CD8-positive, alpha-beta T cell (primary cell): ENCODE measurements at regions of chr3 and their contacts with region 1.

Region 1: DNA sequence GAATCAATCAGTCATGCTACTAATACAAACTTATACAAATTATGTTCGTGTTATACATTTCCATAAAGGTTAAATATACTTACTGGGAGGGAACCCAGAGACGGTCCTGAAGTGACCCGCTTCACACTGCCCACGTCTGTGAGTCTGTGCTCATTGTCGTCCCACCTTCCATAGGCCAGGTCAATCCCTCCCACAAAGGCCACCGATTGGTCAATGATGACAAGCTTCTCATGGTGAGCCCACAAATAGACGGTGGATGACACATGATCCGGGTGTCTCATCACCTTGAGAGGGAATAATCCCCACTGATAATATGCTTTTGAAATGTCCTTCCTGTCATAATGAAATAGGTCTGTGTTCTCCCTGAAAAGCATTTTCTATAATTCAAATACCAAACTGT is 121.7 kb downstream of the PLD1 start:
- DNase-seq: no peak
- ATAC-seq: no peak
- H3K4me3 ChIP-seq: no peak overlapping the region
- H3K4me3 Mint-ChIP-seq: no peak overlapping the region
- H3K27ac ChIP-seq: no peak overlapping the region
- H3K27ac Mint-ChIP-seq: no peak overlapping the region
- H3K4me1 ChIP-seq: no peaks in the 10 kb centered on the region
- H3K4me1 Mint-ChIP-seq: no peaks in the 10 kb centered on the region
- H3K27me3 ChIP-seq: no peaks in the 10 kb centered on the region
- H3K27me3 Mint-ChIP-seq: peaks cover 16% of the 10 kb centered on the region
- CTCF ChIP-seq: no peak

Region 2: GRCh38 chr3:171729452-171730334 is 41.1 kb after region 1 on chr3:
- CTCF ChIA-PET with region 1: no interaction called
- POLR2A ChIA-PET with region 1: no interaction called
- intact Hi-C with region 1: loop called in 1 of 2 experiments (anchors 2 kb)
- DNase-seq: no peak
- ATAC-seq: no peak
- H3K4me3 ChIP-seq: no peak overlapping the region
- H3K4me3 Mint-ChIP-seq: no peak overlapping the region
- H3K27ac ChIP-seq: no peak overlapping the region
- H3K27ac Mint-ChIP-seq: no peak overlapping the region
- H3K4me1 ChIP-seq: no peaks in the 10 kb centered on the region
- H3K4me1 Mint-ChIP-seq: no peaks in the 10 kb centered on the region
- H3K27me3 ChIP-seq: no peaks in the 10 kb centered on the region
- H3K27me3 Mint-ChIP-seq: peaks cover 2% of the 10 kb centered on the region
- CTCF ChIP-seq: no peak